K562 (cell line): ENCODE measurements at regions of chr3 and their contacts with region 1.

Region 1: DNA sequence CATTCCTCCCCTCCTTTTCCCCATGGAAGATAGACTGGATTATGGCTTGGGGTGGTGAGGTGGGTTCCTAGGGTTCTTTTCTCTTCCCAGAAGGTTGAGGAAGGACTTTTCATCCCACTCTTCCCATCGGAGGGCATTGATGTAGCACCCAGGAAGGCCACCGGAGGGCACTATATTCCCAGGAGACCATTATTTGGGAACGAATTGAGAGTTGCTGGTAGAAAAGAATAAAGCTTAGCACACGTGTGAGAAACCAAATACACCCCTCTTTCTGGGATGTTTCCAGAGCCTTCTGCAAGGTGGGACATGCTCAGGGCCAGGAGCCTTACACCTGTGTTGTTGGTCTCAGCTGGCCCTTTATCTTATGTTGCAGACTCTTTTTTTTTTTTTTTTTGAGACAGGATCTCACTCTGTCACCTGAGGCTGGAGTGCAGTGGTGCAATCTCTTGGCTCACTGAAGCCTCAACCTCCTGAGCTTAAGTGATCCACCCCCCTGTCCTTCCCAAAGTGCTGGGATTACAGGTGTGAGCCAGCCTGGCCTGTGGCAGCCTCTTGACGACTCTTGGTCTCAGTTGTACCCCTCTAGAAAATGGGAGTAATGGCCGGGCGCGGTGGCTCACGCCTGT is 6.3 kb upstream of the CDC25A start:
- DNase-seq: peak; percentile 53 to 54 (median 54)
- ATAC-seq: peak; percentile 81
- H3K4me3 ChIP-seq: no peak overlapping the region
- H3K27ac ChIP-seq: no peak overlapping the region
- H3K4me1 ChIP-seq: no peaks in the 10 kb centered on the region; a peak in 2 of 5 replicates
- H3K27me3 ChIP-seq: no peaks in the 10 kb centered on the region
- CTCF ChIP-seq: peak; percentile 65 to 79 (median 78)
- EP300 ChIP-seq: no peak
- POLR2A ChIP-seq: no peak
- RAD21 ChIP-seq: peak; percentile 56 to 71

Region 2: DNA sequence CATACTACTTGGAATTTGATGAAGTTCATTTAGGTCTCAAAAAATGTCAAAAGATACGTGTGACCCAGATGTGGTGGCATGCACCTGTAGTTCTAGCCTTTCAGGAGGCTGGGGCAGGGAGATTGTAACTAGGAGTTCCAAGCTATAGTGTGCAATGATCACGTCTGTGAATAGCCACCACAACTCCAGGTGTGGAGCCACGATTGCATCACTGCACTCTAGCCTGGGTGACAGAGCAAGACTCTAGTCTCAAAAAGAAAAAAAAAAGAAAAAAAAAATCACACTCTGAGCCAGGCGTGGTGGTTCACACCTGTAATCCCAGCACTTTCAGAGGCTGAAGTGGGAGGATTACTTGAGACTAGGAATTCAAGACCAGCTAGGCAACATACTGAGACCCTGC is 192.6 kb before region 1 on chr3:
- CTCF ChIA-PET with region 1: no interaction called
- POLR2A ChIA-PET with region 1: no interaction called
- in situ Hi-C with region 1: no loop called
- intact Hi-C with region 1: no loop called
- DNase-seq: no peak
- ATAC-seq: peak; percentile 81
- H3K4me3 ChIP-seq: no peak overlapping the region
- H3K27ac ChIP-seq: no peak overlapping the region
- H3K4me1 ChIP-seq: peaks cover 0 to 11% of the 10 kb centered on the region in 2 experiments; a peak in 1 of 5 replicates
- H3K27me3 ChIP-seq: no peaks in the 10 kb centered on the region
- CTCF ChIP-seq: no peak
- EP300 ChIP-seq: no peak
- POLR2A ChIP-seq: no peak
- RAD21 ChIP-seq: no peak

Region 3: DNA sequence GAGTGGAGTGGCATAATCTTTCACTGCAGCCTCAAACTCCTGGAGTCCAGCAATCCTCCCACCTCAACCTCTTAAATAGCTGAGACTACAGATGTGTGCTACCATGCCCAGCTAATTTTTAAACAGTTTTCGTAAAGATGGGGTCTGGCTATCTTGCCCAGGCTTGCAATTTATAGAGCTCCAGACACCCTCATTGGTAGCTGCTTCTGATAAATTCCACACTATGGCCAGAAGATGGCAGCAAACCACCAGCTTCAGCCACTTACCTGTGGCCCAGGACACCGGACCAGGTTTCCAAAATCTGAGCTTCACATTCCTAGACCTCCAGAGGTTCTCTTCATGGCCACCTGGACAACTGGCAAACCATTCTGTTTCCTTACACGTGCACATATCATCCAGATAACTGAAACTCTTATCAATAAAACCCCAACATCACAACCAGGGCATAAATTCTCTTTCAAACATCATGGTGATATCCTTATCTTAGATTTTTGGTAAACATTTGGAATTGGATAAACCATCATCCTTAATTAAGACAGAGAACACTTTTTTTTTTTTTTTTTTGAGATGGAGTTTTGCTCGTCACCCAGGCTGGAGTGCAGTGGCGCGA is 206.4 kb after region 1 on chr3:
- CTCF ChIA-PET with region 1: no interaction called
- POLR2A ChIA-PET with region 1: no interaction called
- in situ Hi-C with region 1: no loop called
- intact Hi-C with region 1: loop called (anchors 10 kb)
- DNase-seq: peak; percentile 74 to 79 (median 76)
- ATAC-seq: peak; percentile 86
- H3K4me3 ChIP-seq: no peak overlapping the region
- H3K27ac ChIP-seq: no peak overlapping the region
- H3K4me1 ChIP-seq: peaks cover 0 to 7% of the 10 kb centered on the region in 2 experiments; a peak in 1 of 5 replicates
- H3K27me3 ChIP-seq: no peaks in the 10 kb centered on the region
- CTCF ChIP-seq: peak; percentile 75 to 82 (median 78)
- EP300 ChIP-seq: no peak
- POLR2A ChIP-seq: no peak
- RAD21 ChIP-seq: peak; percentile 69 to 83

Region 4: GRCh38 chr3:48432411-48433372 is 238.1 kb after region 1 on chr3:
- CTCF ChIA-PET with region 1: interaction called, 25 read pairs
- POLR2A ChIA-PET with region 1: interaction called, 4 read pairs
- in situ Hi-C with region 1: loop called (anchors 10 kb)
- intact Hi-C with region 1: loop called (anchors 2 kb)
- DNase-seq: no peak
- ATAC-seq: no peak
- H3K4me3 ChIP-seq: no peak overlapping the region
- H3K27ac ChIP-seq: no peak overlapping the region
- H3K4me1 ChIP-seq: peaks cover 14 to 28% of the 10 kb centered on the region in 2 experiments; a peak in 4 of 5 replicates
- H3K27me3 ChIP-seq: no peaks in the 10 kb centered on the region
- CTCF ChIP-seq: peak in 2 of 3 experiments; percentile 9 to 16; a peak in 2 of 6 replicates
- EP300 ChIP-seq: no peak
- POLR2A ChIP-seq: no peak
- RAD21 ChIP-seq: no peak